CD4-positive, alpha-beta memory T cell (primary cell): ENCODE measurements at regions of chr1 and their contacts with region 1.

Region 1: DNA sequence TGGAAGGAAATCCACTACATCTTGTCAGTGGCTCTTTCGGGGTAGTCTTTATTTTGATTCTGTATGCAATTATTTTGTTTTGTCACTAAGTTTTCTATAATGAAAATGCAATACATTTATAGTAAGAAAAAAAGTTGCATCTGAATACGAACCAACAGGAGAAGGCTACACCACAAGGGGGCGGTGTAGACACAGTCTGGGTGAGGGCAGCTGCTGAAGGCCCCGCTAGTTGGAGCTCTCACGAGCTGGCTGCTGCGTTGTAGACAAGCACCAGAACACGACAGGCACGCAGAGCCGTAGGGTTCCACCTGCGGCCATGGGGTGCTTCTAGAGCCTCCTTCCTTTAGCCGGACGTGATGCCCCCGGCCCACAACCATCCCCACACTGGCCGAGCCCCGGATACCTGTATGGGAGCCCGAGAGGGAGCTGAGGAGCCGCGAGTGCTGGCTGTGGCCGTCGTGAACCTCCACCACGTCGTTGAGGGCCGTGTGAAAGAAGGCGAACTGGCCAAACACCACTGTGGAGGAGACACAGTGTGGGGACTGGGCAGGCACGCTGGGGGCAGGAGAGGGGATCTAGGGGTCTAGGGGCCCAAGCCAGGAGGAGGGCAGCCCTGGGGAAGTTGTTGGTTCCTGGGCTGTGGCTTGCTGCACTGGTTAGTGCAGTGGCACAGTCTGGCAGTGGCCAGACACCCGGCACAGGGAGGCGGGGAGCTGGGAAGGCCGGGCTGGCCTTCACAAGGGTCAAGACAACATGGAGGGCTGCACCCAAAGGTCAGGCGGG is 160.8 kb downstream of the ZSCAN20 start:
- DNase-seq: peak; percentile 65 to 76 (median 71)
- H3K4me3 ChIP-seq: no peak overlapping the region
- H3K4me3 Mint-ChIP-seq: peak overlapping the region in 3 of 8 donors; percentile 9 to 41 (median 24)
- H3K27ac ChIP-seq: no peak overlapping the region
- H3K27ac Mint-ChIP-seq: no peak overlapping the region
- H3K4me1 ChIP-seq: no peaks in the 10 kb centered on the region
- H3K4me1 Mint-ChIP-seq: peaks cover 4 to 12% (median 5%) of the 10 kb centered on the region in 4 donors
- H3K27me3 ChIP-seq: no peaks in the 10 kb centered on the region
- H3K27me3 Mint-ChIP-seq: peaks cover 19 to 29% of the 10 kb centered on the region in 2 donors

Region 2: DNA sequence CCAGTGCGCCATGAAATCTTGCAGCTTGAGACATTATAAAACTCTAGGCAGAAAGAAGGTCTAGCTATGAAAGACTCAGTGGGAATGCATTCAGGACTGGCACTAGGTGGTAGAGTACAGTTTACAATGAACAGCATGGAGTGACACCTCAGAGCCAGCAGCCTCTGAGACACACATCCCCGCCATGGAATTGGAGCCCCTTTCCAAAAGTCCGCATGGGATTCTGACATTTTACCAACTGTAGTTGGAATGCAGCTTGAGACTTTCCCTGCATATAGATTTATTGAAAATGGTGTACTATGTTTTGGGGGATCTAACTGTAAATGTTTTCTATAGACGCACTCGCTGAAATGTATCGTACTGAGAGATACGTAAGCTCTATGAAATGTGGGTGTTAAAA is 44.5 kb before region 1 on chr1:
- CTCF ChIA-PET with region 1: no interaction called
- POLR2A ChIA-PET with region 1: no interaction called
- intact Hi-C with region 1: no loop called
- DNase-seq: no peak
- H3K4me3 ChIP-seq: no peak overlapping the region
- H3K4me3 Mint-ChIP-seq: no peak overlapping the region
- H3K27ac ChIP-seq: no peak overlapping the region
- H3K27ac Mint-ChIP-seq: peak overlapping the region in 1 of 7 donors; percentile 43
- H3K4me1 ChIP-seq: no peaks in the 10 kb centered on the region
- H3K4me1 Mint-ChIP-seq: no peaks in the 10 kb centered on the region
- H3K27me3 ChIP-seq: no peaks in the 10 kb centered on the region
- H3K27me3 Mint-ChIP-seq: peaks cover 6 to 12% of the 10 kb centered on the region in 2 donors

Region 3: DNA sequence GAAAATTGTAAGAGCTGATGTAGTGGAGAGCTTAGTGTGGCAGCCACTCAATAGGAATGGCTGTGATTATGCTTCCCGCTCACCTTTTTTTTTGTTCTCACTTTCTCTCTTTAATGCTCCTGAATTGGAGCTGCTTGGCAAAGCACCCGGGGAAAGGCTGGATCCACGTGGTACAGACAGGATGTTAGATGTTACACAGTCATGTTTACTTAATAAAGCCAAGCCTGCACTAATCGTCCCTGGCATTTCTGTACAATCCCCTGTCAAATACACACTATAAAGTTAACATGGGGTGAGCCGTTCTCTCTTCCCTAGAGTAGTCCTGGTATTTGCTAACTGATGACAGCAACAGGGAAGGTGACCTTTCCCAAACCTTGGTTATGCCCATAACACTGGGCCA is 27.0 kb after region 1 on chr1:
- CTCF ChIA-PET with region 1: interaction called, 14 read pairs
- POLR2A ChIA-PET with region 1: no interaction called
- intact Hi-C with region 1: no loop called
- DNase-seq: no peak
- H3K4me3 ChIP-seq: no peak overlapping the region
- H3K4me3 Mint-ChIP-seq: no peak overlapping the region
- H3K27ac ChIP-seq: no peak overlapping the region
- H3K27ac Mint-ChIP-seq: no peak overlapping the region
- H3K4me1 ChIP-seq: no peaks in the 10 kb centered on the region
- H3K4me1 Mint-ChIP-seq: no peaks in the 10 kb centered on the region
- H3K27me3 ChIP-seq: no peaks in the 10 kb centered on the region
- H3K27me3 Mint-ChIP-seq: peaks cover 1 to 5% of the 10 kb centered on the region in 2 donors

Region 4: DNA sequence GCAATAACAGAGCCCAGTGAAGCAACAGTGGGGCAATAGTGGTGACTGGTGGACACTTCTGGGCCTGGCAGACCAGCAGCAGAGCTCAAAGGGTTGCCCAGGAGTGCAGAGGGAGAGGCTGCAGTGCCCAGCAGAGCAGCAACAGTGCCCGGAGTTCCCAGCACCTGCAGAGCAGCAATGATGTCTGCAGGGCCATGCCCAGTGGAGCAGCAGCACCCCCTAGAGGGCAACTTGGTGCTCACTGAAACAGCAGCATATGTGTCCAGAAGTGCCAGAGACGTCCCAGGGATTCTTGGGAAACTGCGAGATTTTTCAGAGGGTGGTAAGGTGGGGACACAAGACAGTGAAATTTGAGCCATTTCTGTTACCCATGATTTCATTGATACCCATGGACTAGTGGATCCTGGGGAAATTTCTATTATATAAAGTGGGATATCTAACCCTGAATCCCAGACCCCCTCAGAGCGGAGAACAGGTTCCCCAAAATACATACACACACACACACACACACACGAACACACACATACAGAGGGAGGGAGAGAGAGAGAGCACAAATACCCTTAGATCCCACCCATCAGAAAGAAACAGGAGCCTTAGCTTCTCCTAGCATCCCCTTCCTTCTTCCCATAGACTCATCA is 964.8 kb after region 1 on chr1:
- CTCF ChIA-PET with region 1: interaction called, 6 read pairs
- POLR2A ChIA-PET with region 1: no interaction called
- intact Hi-C with region 1: loop called (anchors 2 kb)
- DNase-seq: peak in 3 of 5 donors; percentile 1 to 8 (median 4)
- H3K4me3 ChIP-seq: no peak overlapping the region
- H3K4me3 Mint-ChIP-seq: no peak overlapping the region
- H3K27ac ChIP-seq: no peak overlapping the region
- H3K27ac Mint-ChIP-seq: no peak overlapping the region
- H3K4me1 ChIP-seq: no peaks in the 10 kb centered on the region
- H3K4me1 Mint-ChIP-seq: no peaks in the 10 kb centered on the region
- H3K27me3 ChIP-seq: no peaks in the 10 kb centered on the region
- H3K27me3 Mint-ChIP-seq: peaks cover 11 to 14% of the 10 kb centered on the region in 2 donors